ENCODE measurements at regions of chr4 and their contacts with region 1.

Region 1: DNA sequence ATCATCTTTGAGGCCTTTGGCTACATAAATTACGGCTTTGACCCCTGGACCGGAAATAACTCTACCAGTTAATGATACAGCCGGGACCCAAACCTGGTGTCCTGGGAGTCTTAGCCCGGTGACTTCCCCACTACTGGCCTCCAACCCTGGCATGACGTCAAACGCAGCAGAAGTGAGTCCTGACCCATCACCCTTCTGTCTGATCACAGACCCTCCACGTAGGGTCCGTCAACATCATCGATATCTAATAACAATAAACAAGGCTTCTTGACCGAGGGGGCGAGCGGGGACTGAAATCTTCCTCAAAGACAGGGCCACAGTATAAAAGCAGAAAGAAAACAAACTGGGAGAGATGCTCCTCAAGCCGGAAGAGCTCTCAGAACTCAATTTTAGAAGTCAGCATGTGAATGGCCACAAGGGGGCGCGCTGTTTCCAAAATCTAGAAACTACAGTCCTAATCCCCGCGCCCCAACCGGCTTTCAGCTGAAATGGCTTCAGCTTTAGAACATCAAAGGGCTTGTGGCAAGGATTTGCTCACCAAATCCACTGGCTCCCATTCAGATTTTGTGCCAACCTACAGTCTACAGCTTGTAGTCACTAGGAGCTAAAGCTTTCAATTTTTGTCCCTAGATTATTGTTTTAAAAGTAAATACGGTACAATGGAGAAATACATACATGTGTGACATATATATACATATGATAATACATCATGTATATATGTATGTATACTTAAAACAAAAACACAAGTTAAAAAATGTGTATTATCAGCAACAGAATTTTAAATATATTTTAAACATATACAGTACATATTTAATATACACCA is 46.4 kb upstream of the ENPP6 start:
- DNase-seq: no peak
- ATAC-seq: peak; percentile 45
- H3K4me3 ChIP-seq: peak overlapping the region; percentile 63
- H3K27ac ChIP-seq: peak overlapping the region; percentile 72
- H3K4me1 ChIP-seq: peaks cover 39% of the 10 kb centered on the region
- H3K27me3 ChIP-seq: no peaks in the 10 kb centered on the region
- CTCF ChIP-seq: peak; percentile 67 to 89 (median 86)
- EP300 ChIP-seq: no peak
- POLR2A ChIP-seq: 0 out of 2 replicates have a peak, but pooled peaks have one; percentile 37
- RAD21 ChIP-seq: peak; percentile 91

Region 2: GRCh38 chr4:184250795-184251669 is 13.1 kb before region 1 on chr4:
- CTCF ChIA-PET with region 1: interaction called, 40 read pairs
- POLR2A ChIA-PET with region 1: interaction called, 4 read pairs
- RAD21 ChIA-PET with region 1: interaction called, 4 read pairs
- SMC1A ChIA-PET with region 1: interaction called, 7 read pairs
- in situ Hi-C with region 1: no loop called
- intact Hi-C with region 1: no loop called
- DNase-seq: no peak
- ATAC-seq: peak; percentile 97
- H3K4me3 ChIP-seq: no peak overlapping the region
- H3K27ac ChIP-seq: no peak overlapping the region
- H3K4me1 ChIP-seq: no peaks in the 10 kb centered on the region
- H3K27me3 ChIP-seq: no peaks in the 10 kb centered on the region
- CTCF ChIP-seq: peak; percentile 38 to 60 (median 54); a peak in 5 of 6 replicates
- EP300 ChIP-seq: no peak
- POLR2A ChIP-seq: no peak
- RAD21 ChIP-seq: peak; percentile 67

Region 3: GRCh38 chr4:184318852-184319251 is 54.7 kb after region 1 on chr4:
- CTCF ChIA-PET with region 1: interaction called, 28 read pairs
- POLR2A ChIA-PET with region 1: interaction called, 120 read pairs
- RAD21 ChIA-PET with region 1: interaction called, 253 read pairs
- SMC1A ChIA-PET with region 1: interaction called, 325 read pairs
- in situ Hi-C with region 1: no loop called
- intact Hi-C with region 1: loop called (anchors 1 kb)
- DNase-seq: no peak
- ATAC-seq: peak; percentile 1
- H3K4me3 ChIP-seq: peak overlapping the region; percentile 20; the same call in 1 of the 2 replicates
- H3K27ac ChIP-seq: peak overlapping the region; percentile 92
- H3K4me1 ChIP-seq: peaks cover 52% of the 10 kb centered on the region
- H3K27me3 ChIP-seq: no peaks in the 10 kb centered on the region
- CTCF ChIP-seq: no peak
- EP300 ChIP-seq: no peak
- POLR2A ChIP-seq: no peak
- RAD21 ChIP-seq: no peak

Region 4: DNA sequence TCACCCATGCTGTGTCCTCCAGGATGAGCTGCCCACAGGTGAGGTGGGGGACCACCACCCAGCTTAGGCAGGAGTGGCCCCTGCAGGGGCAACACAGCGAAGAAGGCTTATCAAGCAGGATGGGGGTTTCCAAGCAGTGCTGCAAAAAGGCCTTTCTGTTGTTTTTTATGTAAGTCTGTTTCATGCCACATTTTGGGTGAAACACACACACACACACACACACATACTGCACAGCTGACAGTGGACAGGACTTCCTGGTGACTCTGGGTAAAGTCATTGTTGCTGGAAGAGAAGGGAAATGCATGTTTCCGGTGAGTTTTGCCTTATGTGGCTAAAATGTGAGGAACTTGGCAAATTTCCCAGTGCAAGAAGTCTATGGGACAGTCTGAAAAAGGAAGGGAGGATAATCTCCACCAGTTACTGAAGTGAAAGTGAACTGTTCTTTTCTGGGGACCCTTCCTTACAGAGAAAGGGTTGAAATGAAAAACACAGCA is 91.0 kb after region 1 on chr4:
- CTCF ChIA-PET with region 1: interaction called, 73 read pairs
- POLR2A ChIA-PET with region 1: interaction called, 227 read pairs
- RAD21 ChIA-PET with region 1: interaction called, 253 read pairs
- SMC1A ChIA-PET with region 1: interaction called, 305 read pairs
- in situ Hi-C with region 1: no loop called
- intact Hi-C with region 1: loop called (anchors 1 kb)
- DNase-seq: peak; percentile 84
- ATAC-seq: peak; percentile 15
- H3K4me3 ChIP-seq: no peak overlapping the region
- H3K27ac ChIP-seq: peak overlapping the region; percentile 99
- H3K4me1 ChIP-seq: peaks cover 16% of the 10 kb centered on the region
- H3K27me3 ChIP-seq: no peaks in the 10 kb centered on the region
- CTCF ChIP-seq: no peak
- EP300 ChIP-seq: peak; percentile 52 to 63; a peak in 2 of 4 replicates
- POLR2A ChIP-seq: no peak
- RAD21 ChIP-seq: peak; percentile 28

Region 5: DNA sequence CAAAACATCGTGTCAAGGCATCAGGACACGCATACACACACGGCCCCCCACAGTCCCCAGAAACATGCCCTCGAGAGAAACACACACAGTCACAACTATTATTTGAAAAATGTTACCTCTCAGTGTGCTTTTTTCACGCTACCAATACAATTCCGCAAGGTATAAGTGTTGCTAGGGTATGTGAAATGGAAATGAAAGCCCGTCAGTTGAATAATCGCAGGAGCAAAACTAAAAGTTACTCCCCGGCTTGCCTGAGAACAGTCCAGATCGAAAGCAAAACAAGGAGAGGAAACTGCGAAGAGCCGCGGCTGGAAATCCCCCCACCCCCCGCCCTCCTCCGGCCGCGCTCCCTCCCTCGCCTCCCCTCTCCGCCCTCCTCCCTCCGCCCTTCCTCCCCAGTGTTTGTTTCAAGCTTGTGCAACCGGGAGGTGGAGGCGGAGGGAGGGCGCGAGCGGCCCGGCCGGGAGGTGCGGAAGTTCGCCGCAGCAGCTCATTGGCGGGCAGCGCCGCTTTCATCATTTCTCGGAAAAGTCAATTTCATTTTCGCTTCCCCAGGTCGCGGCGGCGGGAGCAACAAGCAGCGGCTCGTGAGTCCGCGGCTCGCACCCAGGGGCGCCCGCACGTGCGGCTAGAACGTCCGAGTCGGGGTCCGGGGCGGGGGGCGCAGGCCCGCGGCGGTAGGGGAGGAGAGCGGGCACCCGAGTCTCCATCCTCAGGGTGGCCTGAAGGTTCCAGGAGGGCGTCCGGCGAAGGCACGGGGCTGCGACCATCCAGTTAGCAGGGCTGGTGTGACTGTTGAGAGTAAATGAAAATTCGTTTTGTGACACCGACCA is 210.4 kb after region 1 on chr4 and contains the start of gene IRF2:
- CTCF ChIA-PET with region 1: interaction called, 6 read pairs
- POLR2A ChIA-PET with region 1: interaction called, 8 read pairs
- RAD21 ChIA-PET with region 1: interaction called, 47 read pairs
- SMC1A ChIA-PET with region 1: interaction called, 7 read pairs
- in situ Hi-C with region 1: no loop called
- intact Hi-C with region 1: loop called (anchors 1 kb)
- DNase-seq: peak; percentile 93
- ATAC-seq: peak; percentile 75
- H3K4me3 ChIP-seq: peak within 1 kb of the TSS; percentile 99
- H3K27ac ChIP-seq: peak within 1 kb of the TSS; percentile 92
- H3K4me1 ChIP-seq: peaks cover 14% of the 10 kb centered on the region
- H3K27me3 ChIP-seq: no peaks in the 10 kb centered on the region
- CTCF ChIP-seq: no peak
- EP300 ChIP-seq: peak; percentile 51; a peak in 3 of 4 replicates
- POLR2A ChIP-seq: peak; percentile 87
- RAD21 ChIP-seq: peak; percentile 47; the same call in 1 of the 2 replicates
- polyA plus RNA-seq, gene IRF2: 58.4 to 59.9 TPM

Region 6: DNA sequence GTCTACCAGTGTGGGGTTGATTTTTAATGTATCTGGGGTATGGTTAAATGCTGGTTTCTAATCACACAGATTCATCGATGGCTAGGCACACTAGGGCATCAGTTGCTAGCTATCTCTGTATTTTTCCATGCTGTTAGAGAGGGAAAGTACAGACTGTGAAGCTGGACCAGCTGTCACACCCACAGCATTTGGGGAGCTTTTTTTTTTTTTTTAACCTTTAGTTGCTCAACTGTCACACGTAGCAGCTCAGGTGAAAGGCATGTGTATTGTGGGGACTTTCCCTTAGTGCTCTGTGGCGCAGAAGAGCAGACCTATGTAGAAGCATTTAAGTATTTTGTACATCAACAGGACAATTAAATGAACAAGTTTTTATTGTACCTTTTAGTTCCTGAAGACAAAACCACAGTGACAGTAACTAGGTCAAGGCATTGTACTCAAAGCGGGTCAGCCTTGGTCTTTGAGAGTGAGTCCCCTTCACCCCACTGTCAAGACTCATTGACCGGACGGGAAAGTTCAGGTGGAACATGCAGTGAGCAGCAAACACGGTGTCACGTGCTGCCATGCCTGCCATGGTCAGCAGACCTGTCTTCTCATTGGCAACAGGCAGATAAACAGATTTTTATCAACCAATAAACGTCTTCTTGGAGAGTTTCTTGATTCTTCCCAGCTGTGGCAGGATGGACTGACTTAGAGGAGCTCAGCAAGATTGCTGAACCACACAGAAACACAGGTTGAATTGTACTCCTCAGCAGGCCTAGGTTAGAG is 319.8 kb after region 1 on chr4:
- CTCF ChIA-PET with region 1: interaction called, 4 read pairs
- POLR2A ChIA-PET with region 1: interaction called, 7 read pairs
- RAD21 ChIA-PET with region 1: interaction called, 18 read pairs
- SMC1A ChIA-PET with region 1: interaction called, 10 read pairs
- in situ Hi-C with region 1: no loop called
- intact Hi-C with region 1: no loop called
- DNase-seq: peak; percentile 41
- ATAC-seq: peak; percentile 78
- H3K4me3 ChIP-seq: no peak overlapping the region
- H3K27ac ChIP-seq: peak overlapping the region; percentile 50
- H3K4me1 ChIP-seq: peaks cover 24% of the 10 kb centered on the region
- H3K27me3 ChIP-seq: no peaks in the 10 kb centered on the region
- CTCF ChIP-seq: no peak
- EP300 ChIP-seq: peak in 1 of 2 experiments; percentile 61; a peak in 2 of 4 replicates
- POLR2A ChIP-seq: no peak
- RAD21 ChIP-seq: no peak

Region 7: DNA sequence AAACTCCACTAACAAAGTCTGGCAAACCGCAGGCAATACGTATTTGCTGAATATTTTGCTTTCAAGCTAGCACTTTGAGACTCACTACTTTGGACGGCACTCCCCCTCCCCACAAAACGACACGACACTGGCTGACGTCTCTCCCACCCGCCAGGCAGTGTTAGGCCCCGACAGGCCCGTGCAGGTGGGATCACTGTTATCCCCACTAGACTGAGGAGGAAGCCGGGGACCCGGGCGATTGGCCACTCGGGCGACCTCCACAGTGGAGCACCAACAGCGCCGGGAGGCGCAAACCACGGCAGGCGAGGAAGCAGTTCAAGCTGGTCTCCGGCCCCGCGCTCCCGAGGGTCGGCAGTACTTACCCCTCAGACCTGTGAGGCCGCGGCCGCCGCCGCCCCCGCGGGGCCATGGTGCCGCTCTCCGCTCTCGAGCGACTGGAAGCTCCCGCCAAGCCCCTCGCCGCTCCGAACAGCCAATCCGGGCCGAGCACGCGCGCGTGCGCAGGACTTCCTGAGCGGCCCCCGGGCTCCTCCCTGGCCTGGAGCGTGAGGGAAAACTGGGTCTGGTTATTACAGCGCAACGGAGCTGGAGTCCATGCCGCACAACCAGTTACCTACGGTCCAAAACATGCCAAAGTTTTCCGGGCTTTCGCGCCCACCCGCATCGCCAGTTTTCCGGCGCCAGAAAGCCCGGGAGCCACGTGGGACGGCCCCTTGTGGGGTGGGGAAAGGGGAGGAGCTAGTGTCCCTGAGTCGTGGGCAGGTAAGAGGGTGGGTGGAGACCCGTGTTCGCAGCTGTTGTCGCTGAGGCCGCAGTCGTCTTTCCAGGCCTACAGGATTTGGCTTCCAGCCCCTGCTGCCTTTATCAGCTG is 469.8 kb after region 1 on chr4 and contains the start of gene CENPU:
- CTCF ChIA-PET with region 1: interaction called, 19 read pairs
- POLR2A ChIA-PET with region 1: interaction called, 8 read pairs
- RAD21 ChIA-PET with region 1: interaction called, 15 read pairs
- SMC1A ChIA-PET with region 1: interaction called, 7 read pairs
- in situ Hi-C with region 1: no loop called
- intact Hi-C with region 1: loop called (anchors 5 kb)
- DNase-seq: peak; percentile 94
- ATAC-seq: peak; percentile 93
- H3K4me3 ChIP-seq: peak within 1 kb of the TSS; percentile 91
- H3K27ac ChIP-seq: peak within 1 kb of the TSS; percentile 81
- H3K4me1 ChIP-seq: peaks cover 9% of the 10 kb centered on the region
- H3K27me3 ChIP-seq: no peaks in the 10 kb centered on the region
- CTCF ChIP-seq: no peak
- EP300 ChIP-seq: no peak
- POLR2A ChIP-seq: peak; percentile 91
- RAD21 ChIP-seq: 0 out of 2 replicates have a peak, but pooled peaks have one; percentile 22
- polyA plus RNA-seq, gene CENPU: 26.6 to 46.5 TPM